ENCODE measurements at regions of chr7 and their contacts with region 1.

Region 1: GRCh38 chr7:79806161-79806734 is 328.4 kb upstream of the GNAI1 start:
- DNase-seq: no peak
- H3K4me3 Mint-ChIP-seq: no peak overlapping the region
- H3K27ac Mint-ChIP-seq: no peak overlapping the region
- H3K4me1 Mint-ChIP-seq: peaks cover under 1% of the 10 kb centered on the region
- H3K27me3 Mint-ChIP-seq: no peaks in the 10 kb centered on the region
- CTCF ChIP-seq: no peak

Region 2: DNA sequence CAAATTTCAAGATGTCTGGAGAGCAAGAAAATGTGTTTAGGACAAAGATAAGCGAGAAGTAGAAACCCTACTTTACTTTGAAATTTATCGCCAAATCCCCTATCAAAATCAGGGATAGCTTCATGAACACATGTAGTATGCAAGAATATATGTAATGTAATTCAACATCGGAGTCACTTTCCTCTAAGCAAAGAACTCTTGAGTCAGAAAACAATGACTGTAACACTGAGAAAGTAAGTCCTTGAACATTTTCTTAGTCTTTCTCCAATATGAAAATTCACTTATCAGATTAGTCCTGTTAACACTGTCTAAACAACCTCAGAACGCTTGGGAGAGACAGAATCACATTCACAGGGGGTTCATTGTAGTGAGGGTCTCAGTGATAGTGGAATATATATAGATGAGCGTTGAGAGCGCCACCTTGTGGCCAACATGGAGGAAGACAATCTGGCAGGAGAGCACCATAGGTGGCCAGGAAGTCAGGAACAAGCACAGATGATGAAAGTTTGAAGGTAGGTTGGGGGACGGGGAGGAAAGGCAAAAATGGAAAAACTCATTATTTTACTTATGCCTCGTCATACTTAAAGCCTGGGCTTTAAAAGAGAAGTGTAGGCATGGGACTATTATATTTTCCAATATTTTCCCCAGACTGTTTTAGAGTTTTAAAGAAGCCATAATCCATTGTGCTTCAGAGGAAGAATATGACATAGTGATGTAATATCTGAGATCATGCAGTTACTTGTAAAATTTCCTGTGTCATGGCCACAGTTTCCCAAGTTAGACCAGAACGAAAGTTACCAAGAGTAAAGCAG is 212.9 kb after region 1 on chr7:
- CTCF ChIA-PET with region 1: no interaction called
- intact Hi-C with region 1: loop called (anchors 1 kb)
- DNase-seq: peak; percentile 33
- H3K4me3 Mint-ChIP-seq: no peak overlapping the region
- H3K27ac Mint-ChIP-seq: no peak overlapping the region
- H3K4me1 Mint-ChIP-seq: no peaks in the 10 kb centered on the region
- H3K27me3 Mint-ChIP-seq: no peaks in the 10 kb centered on the region
- CTCF ChIP-seq: peak; percentile 47

Region 3: DNA sequence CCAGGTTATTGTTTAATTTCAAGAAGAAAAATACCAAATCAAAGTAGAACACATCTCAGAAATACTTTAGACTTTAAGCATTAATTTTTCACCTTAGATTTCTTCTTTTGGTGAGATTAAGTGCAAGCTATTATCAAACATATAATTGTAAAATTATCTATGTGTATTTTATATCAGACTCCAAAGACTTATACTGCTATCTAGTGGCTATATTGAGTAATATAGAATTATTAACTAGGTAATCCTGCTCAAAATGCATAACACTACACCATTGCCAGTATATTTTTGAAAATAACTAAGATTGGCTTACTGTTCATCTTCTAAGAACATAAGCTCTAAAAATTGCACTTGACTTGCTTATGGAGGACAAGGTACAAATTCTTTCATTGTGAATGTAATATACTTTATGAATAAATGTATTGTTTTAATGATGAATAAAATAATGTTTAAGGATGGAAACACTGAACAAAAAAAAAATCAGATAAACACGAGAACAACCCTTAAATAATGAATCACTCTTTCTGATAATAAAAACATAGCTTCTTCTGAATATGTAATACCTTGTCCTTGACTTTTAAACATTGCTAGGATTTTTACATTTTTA is 241.7 kb after region 1 on chr7:
- CTCF ChIA-PET with region 1: no interaction called
- intact Hi-C with region 1: loop called (anchors 2 kb)
- DNase-seq: no peak
- H3K4me3 Mint-ChIP-seq: no peak overlapping the region
- H3K27ac Mint-ChIP-seq: no peak overlapping the region
- H3K4me1 Mint-ChIP-seq: no peaks in the 10 kb centered on the region
- H3K27me3 Mint-ChIP-seq: no peaks in the 10 kb centered on the region
- CTCF ChIP-seq: no peak